Natural killer cell (primary cell): ENCODE measurements at regions of chr12 and their contacts with region 1.

Region 1: DNA sequence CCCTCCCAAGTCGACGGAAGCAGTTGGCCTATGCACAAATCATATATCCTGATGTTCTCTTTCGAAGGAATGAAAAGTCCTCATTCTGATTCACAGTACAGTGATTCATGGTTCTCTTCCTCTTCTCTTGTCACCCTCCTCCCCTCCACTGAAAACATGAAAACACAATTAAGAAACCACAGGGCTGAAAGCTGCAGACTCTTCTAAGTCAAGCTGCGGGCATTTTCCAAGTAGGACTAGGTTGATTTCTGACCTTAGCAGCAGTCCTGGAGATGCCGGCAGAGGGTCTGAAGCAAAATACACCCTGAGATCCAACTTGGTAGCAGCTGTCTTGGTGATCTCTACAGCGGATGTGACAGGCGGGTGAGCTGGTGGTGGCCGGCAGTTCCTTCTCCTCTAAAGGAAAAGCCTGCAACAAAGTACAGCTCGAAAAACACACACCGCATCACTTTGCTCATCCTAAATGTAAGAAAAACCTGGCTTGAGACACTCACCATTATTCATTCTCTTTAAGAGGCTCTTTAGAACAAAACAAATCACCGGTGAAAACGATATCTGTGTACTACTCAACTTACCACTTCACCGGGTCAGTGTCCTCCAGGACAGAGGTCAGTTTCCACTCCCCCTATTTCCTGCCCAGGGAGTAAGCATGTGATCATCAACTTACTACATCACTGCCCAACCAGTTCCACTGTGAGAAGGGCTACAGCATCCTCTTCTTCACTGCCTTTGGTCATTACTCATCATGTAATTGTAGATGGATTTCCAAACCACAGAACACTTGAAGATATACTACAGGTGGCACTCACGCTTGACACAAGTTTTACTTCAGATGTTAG is 6.0 kb downstream of the TMCC3 start:
- DNase-seq: peak; percentile 26 to 31
- ATAC-seq: peak; percentile 64 to 77 (median 71)
- H3K4me3 ChIP-seq: peak overlapping the region; percentile 13
- H3K4me3 Mint-ChIP-seq: peak overlapping the region; percentile 80
- H3K27ac ChIP-seq: peak overlapping the region; percentile 40
- H3K27ac Mint-ChIP-seq: peak overlapping the region; percentile 84 to 85
- H3K4me1 ChIP-seq: peaks cover 33% of the 10 kb centered on the region
- H3K4me1 Mint-ChIP-seq: peaks cover 58 to 68% of the 10 kb centered on the region in 2 donors
- H3K27me3 ChIP-seq: no peaks in the 10 kb centered on the region
- H3K27me3 Mint-ChIP-seq: peaks cover 0 to 2% of the 10 kb centered on the region in 2 donors
- CTCF ChIP-seq: no peak

Region 2: GRCh38 chr12:94603434-94604365 is 40.7 kb before region 1 on chr12:
- intact Hi-C with region 1: no loop called
- DNase-seq: peak; percentile 53 to 79
- ATAC-seq: peak; percentile 87 to 95 (median 94)
- H3K4me3 ChIP-seq: no peak overlapping the region
- H3K4me3 Mint-ChIP-seq: no peak overlapping the region
- H3K27ac ChIP-seq: no peak overlapping the region
- H3K27ac Mint-ChIP-seq: peak overlapping the region in 1 of 2 donors; percentile 32
- H3K4me1 ChIP-seq: peaks cover 7% of the 10 kb centered on the region
- H3K4me1 Mint-ChIP-seq: peaks cover 15 to 33% of the 10 kb centered on the region in 2 donors
- H3K27me3 ChIP-seq: no peaks in the 10 kb centered on the region
- H3K27me3 Mint-ChIP-seq: no peaks in the 10 kb centered on the region
- CTCF ChIP-seq: peak; percentile 74

Region 3: GRCh38 chr12:94621664-94622359 is 22.5 kb before region 1 on chr12:
- intact Hi-C with region 1: loop called (anchors 1 kb)
- DNase-seq: peak in 1 of 2 donors; percentile 63
- ATAC-seq: peak; percentile 90 to 95 (median 95)
- H3K4me3 ChIP-seq: peak overlapping the region; percentile 10
- H3K4me3 Mint-ChIP-seq: peak overlapping the region; percentile 82
- H3K27ac ChIP-seq: peak overlapping the region; percentile 54
- H3K27ac Mint-ChIP-seq: peak overlapping the region; percentile 88 to 89
- H3K4me1 ChIP-seq: peaks cover 7% of the 10 kb centered on the region
- H3K4me1 Mint-ChIP-seq: peaks cover 24 to 30% of the 10 kb centered on the region in 2 donors
- H3K27me3 ChIP-seq: no peaks in the 10 kb centered on the region
- H3K27me3 Mint-ChIP-seq: no peaks in the 10 kb centered on the region
- CTCF ChIP-seq: no peak